ENCODE measurements at regions of chr19 and their contacts with region 1.

Region 1: GRCh38 chr19:44212250-44212865 is at the start of gene ZNF227:
- DNase-seq: peak; percentile 97
- ATAC-seq: peak; percentile 96
- H3K4me3 ChIP-seq: peak within 1 kb of the TSS; percentile 78
- H3K27ac ChIP-seq: peak within 1 kb of the TSS; percentile 68
- H3K4me1 ChIP-seq: no peaks in the 10 kb centered on the region
- H3K27me3 ChIP-seq: no peaks in the 10 kb centered on the region
- CTCF ChIP-seq: no peak
- POLR2A ChIP-seq: 0 out of 2 replicates have a peak, but pooled peaks have one; percentile 30
- RAD21 ChIP-seq: no peak
- total RNA-seq, gene ZNF227: 17.8 and 19.2 TPM in 2 replicates

Region 2: GRCh38 chr19:44113138-44113783 is 99.1 kb before region 1 on chr19 and contains the start of gene ZNF225:
- CTCF ChIA-PET with region 1: no interaction called
- POLR2A ChIA-PET with region 1: no interaction called
- dilution Hi-C with region 1: no loop called
- in situ Hi-C with region 1: no loop called
- intact Hi-C with region 1: loop called (anchors 5 kb)
- DNase-seq: peak; percentile 99
- ATAC-seq: peak; percentile 94
- H3K4me3 ChIP-seq: peak within 1 kb of the TSS; percentile 70
- H3K27ac ChIP-seq: peak within 1 kb of the TSS; percentile 74
- H3K4me1 ChIP-seq: no peaks in the 10 kb centered on the region
- H3K27me3 ChIP-seq: no peaks in the 10 kb centered on the region
- CTCF ChIP-seq: no peak
- POLR2A ChIP-seq: peak; percentile 65
- RAD21 ChIP-seq: no peak; the same call in none of the 2 replicates
- total RNA-seq, gene ZNF225: 5.7 and 6.1 TPM in 2 replicates

Region 3: GRCh38 chr19:44304659-44305193 is 92.4 kb after region 1 on chr19 and contains the start of gene ZNF235:
- CTCF ChIA-PET with region 1: no interaction called
- POLR2A ChIA-PET with region 1: no interaction called
- dilution Hi-C with region 1: no loop called
- in situ Hi-C with region 1: no loop called
- intact Hi-C with region 1: loop called (anchors 5 kb)
- DNase-seq: peak; percentile 99
- ATAC-seq: peak; percentile 97
- H3K4me3 ChIP-seq: peak within 1 kb of the TSS; percentile 74
- H3K27ac ChIP-seq: peak within 1 kb of the TSS; percentile 86
- H3K4me1 ChIP-seq: peaks cover 3% of the 10 kb centered on the region; the same call in 1 of the 2 replicates
- H3K27me3 ChIP-seq: no peaks in the 10 kb centered on the region
- CTCF ChIP-seq: no peak
- POLR2A ChIP-seq: no peak
- RAD21 ChIP-seq: no peak
- total RNA-seq, gene ZNF235: 3.0 and 3.1 TPM in 2 replicates

Region 4: GRCh38 chr19:44401139-44402115 is 189.1 kb after region 1 on chr19 and contains the start of gene ZNF285:
- CTCF ChIA-PET with region 1: no interaction called
- POLR2A ChIA-PET with region 1: no interaction called
- dilution Hi-C with region 1: no loop called
- in situ Hi-C with region 1: no loop called
- intact Hi-C with region 1: loop called (anchors 5 kb)
- DNase-seq: peak; percentile 95
- ATAC-seq: peak; percentile 99
- H3K4me3 ChIP-seq: peak within 1 kb of the TSS; percentile 57
- H3K27ac ChIP-seq: peak within 1 kb of the TSS; percentile 19; the same call in 1 of the 2 replicates
- H3K4me1 ChIP-seq: no peaks in the 10 kb centered on the region
- H3K27me3 ChIP-seq: no peaks in the 10 kb centered on the region
- CTCF ChIP-seq: no peak
- POLR2A ChIP-seq: no peak
- RAD21 ChIP-seq: no peak
- total RNA-seq, gene ZNF285: 5.0 and 5.9 TPM in 2 replicates